CD4-positive, alpha-beta T cell (primary cell): ENCODE measurements at regions of chr20 and their contacts with region 1.

Region 1: DNA sequence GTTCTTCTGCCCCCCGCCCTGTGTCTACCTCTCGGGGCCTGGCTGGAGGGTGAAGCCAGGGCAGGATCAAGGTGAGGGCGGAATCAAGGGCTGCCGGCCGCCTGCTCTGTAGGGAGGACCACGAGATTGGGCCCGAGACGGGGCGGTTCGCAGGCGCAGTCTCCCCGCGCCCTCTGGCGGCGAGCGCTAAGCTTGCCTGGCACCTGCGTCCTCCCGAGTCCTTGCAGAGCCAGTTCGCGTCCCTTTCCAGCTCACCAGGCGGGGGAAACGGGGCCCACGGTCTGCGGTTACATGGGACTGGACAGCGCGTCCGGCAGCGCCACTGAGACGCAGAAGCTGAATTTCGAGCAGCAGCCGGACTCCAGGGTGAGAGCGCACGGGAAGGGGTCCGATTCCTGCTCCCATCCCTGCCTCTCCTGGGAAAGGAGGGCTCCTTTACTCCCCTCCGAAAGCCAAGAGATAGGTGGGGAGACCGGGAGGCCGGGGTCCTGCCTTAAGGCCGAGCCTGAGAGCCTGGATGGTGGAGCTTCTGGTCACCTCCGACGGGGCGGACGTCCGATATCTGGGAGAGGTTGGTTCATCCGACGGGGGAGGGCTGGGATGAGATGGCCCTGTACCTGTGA is 3.6 kb upstream of the MATN4 start:
- DNase-seq: peak in 13 of 14 experiments; percentile 32 to 75 (median 48)
- ATAC-seq: peak; percentile 74
- H3K4me3 ChIP-seq: no peak overlapping the region
- H3K4me3 Mint-ChIP-seq: no peak overlapping the region
- H3K27ac ChIP-seq: no peak overlapping the region
- H3K27ac Mint-ChIP-seq: no peak overlapping the region
- H3K4me1 ChIP-seq: peaks cover 8% of the 10 kb centered on the region
- H3K4me1 Mint-ChIP-seq: peaks cover 7% of the 10 kb centered on the region
- H3K27me3 ChIP-seq: peaks cover 33 to 43% of the 10 kb centered on the region in 2 experiments
- H3K27me3 Mint-ChIP-seq: peaks cover 83% of the 10 kb centered on the region
- CTCF ChIP-seq: peak; percentile 69

Region 2: GRCh38 chr20:45293041-45294002 is 18.4 kb before region 1 on chr20:
- CTCF ChIA-PET with region 1: interaction called, 12 read pairs
- POLR2A ChIA-PET with region 1: no interaction called
- intact Hi-C with region 1: no loop called
- DNase-seq: peak; percentile 63 to 84 (median 74)
- ATAC-seq: peak; percentile 92
- H3K4me3 ChIP-seq: peak overlapping the region; percentile 40
- H3K4me3 Mint-ChIP-seq: peak overlapping the region; percentile 82
- H3K27ac ChIP-seq: no peak overlapping the region
- H3K27ac Mint-ChIP-seq: no peak overlapping the region
- H3K4me1 ChIP-seq: peaks cover 17% of the 10 kb centered on the region
- H3K4me1 Mint-ChIP-seq: no peaks in the 10 kb centered on the region
- H3K27me3 ChIP-seq: peaks cover 15 to 23% of the 10 kb centered on the region in 2 experiments
- H3K27me3 Mint-ChIP-seq: peaks cover 66% of the 10 kb centered on the region
- CTCF ChIP-seq: peak; percentile 95